Panc1 (cell line): ENCODE measurements at regions of chr20 and their contacts with region 1.

Region 1: GRCh38 chr20:34604980-34605788 is 46.7 kb downstream of the MAP1LC3A start:
- DNase-seq: no peak
- ATAC-seq: no peak
- H3K4me3 ChIP-seq: no peak overlapping the region
- H3K27ac ChIP-seq: no peak overlapping the region
- H3K4me1 ChIP-seq: no peaks in the 10 kb centered on the region
- H3K27me3 ChIP-seq: no peaks in the 10 kb centered on the region
- CTCF ChIP-seq: no peak

Region 2: GRCh38 chr20:34676642-34677373 is 71.6 kb after region 1 on chr20 and contains the start of gene PIGU:
- CTCF ChIA-PET with region 1: no interaction called
- POLR2A ChIA-PET with region 1: interaction called, 15 read pairs
- in situ Hi-C with region 1: no loop called
- intact Hi-C with region 1: no loop called
- DNase-seq: peak; percentile 81
- ATAC-seq: peak; percentile 99
- H3K4me3 ChIP-seq: peak within 1 kb of the TSS; percentile 68 to 90
- H3K27ac ChIP-seq: peak within 1 kb of the TSS; percentile 78
- H3K4me1 ChIP-seq: peaks cover 5% of the 10 kb centered on the region; the same call in 1 of the 2 replicates
- H3K27me3 ChIP-seq: no peaks in the 10 kb centered on the region
- CTCF ChIP-seq: no peak
- total RNA-seq, gene PIGU: 22.9 TPM